GM12878 (cell line): ENCODE measurements at regions of chr2 and their contacts with region 1.

Region 1: DNA sequence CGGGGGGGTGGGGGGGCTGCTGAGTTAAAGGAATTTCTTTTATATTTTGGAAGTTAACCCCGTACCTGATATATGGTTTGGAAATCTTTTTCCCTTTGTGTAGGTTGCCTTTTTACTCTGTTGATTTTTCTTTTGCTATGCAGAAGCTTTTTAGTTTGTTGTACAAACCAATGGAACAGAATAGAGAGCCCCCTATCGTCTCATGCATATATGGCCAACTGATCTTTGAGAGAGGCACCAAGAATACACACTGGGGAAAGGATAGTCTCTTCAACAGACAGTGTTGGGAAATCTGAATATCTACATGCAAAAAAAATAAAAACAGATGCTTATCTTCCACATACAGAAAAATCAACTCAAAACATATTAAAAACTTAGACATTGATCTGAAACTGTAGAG is 647.8 kb upstream of the KLHL29 start:
- DNase-seq: no peak
- ATAC-seq: 0 out of 3 replicates have a peak, but pooled peaks have one; percentile 42
- H3K4me3 ChIP-seq: no peak overlapping the region
- H3K27ac ChIP-seq: no peak overlapping the region
- H3K4me1 ChIP-seq: no peaks in the 10 kb centered on the region
- H3K27me3 ChIP-seq: no peaks in the 10 kb centered on the region
- CTCF ChIP-seq: no peak
- EP300 ChIP-seq: no peak
- POLR2A ChIP-seq: no peak
- RAD21 ChIP-seq: no peak

Region 2: GRCh38 chr2:22355816-22356433 is 381.2 kb before region 1 on chr2:
- CTCF ChIA-PET with region 1: interaction called, 3 read pairs
- POLR2A ChIA-PET with region 1: no interaction called
- RAD21 ChIA-PET with region 1: no interaction called
- SMC1A ChIA-PET with region 1: no interaction called
- in situ Hi-C with region 1: no loop called
- intact Hi-C with region 1: loop called (anchors 2 kb)
- DNase-seq: no peak
- ATAC-seq: peak; percentile 77
- H3K4me3 ChIP-seq: no peak overlapping the region
- H3K27ac ChIP-seq: no peak overlapping the region
- H3K4me1 ChIP-seq: no peaks in the 10 kb centered on the region
- H3K27me3 ChIP-seq: no peaks in the 10 kb centered on the region; a peak in 1 of 4 replicates
- CTCF ChIP-seq: peak; percentile 77 to 87 (median 77)
- EP300 ChIP-seq: no peak
- POLR2A ChIP-seq: no peak
- RAD21 ChIP-seq: peak; percentile 55

Region 3: DNA sequence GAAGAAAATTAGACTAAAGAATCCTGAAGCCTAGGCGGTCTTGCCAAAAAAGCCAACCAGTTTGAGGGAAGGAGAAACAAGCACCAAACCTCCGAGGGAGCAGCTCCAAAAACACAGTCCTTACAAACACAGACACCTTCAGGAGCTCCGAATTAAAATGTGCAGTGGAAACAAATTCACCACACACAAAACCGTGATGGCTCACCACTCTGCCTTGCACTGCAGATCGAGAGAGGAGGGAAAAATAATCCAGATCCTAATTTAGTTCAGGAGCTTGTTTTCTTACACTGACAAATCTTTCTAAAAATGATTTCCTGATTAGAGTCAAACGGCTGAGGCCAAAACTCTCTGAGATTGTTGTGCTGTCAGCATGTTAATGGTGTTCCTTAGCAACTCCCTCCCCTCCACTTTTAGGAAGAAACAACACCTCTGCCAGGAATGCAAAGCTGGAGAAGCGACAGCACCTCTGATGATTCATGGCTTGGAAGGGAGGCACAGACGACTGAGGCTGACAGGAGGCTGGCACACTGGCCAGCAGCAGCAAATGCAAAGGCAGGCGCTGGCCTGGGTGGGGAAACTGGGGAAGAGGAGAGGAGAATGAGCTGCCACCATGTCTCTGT is 398.4 kb after region 1 on chr2:
- CTCF ChIA-PET with region 1: no interaction called
- POLR2A ChIA-PET with region 1: no interaction called
- RAD21 ChIA-PET with region 1: no interaction called
- SMC1A ChIA-PET with region 1: no interaction called
- in situ Hi-C with region 1: no loop called
- intact Hi-C with region 1: no loop called
- DNase-seq: no peak
- ATAC-seq: no peak
- H3K4me3 ChIP-seq: no peak overlapping the region
- H3K27ac ChIP-seq: no peak overlapping the region
- H3K4me1 ChIP-seq: no peaks in the 10 kb centered on the region
- H3K27me3 ChIP-seq: no peaks in the 10 kb centered on the region; a peak in 1 of 4 replicates
- CTCF ChIP-seq: no peak
- EP300 ChIP-seq: no peak
- POLR2A ChIP-seq: no peak
- RAD21 ChIP-seq: no peak